CD8-positive, alpha-beta memory T cell (primary cell): ENCODE measurements at regions of chr12 and their contacts with region 1.

Region 1: GRCh38 chr12:54359033-54359761 is 5.1 kb downstream of the GPR84 start:
- DNase-seq: peak; percentile 89 to 97 (median 94)
- H3K4me3 ChIP-seq: peak overlapping the region; percentile 80
- H3K4me3 Mint-ChIP-seq: no peak overlapping the region
- H3K27ac ChIP-seq: peak overlapping the region; percentile 71
- H3K27ac Mint-ChIP-seq: no peak overlapping the region
- H3K4me1 ChIP-seq: peaks cover 23% of the 10 kb centered on the region
- H3K4me1 Mint-ChIP-seq: peaks cover 8 to 13% (median 11%) of the 10 kb centered on the region in 3 donors
- H3K27me3 ChIP-seq: no peaks in the 10 kb centered on the region
- H3K27me3 Mint-ChIP-seq: peaks cover 0 to 2% of the 10 kb centered on the region in 2 donors

Region 2: DNA sequence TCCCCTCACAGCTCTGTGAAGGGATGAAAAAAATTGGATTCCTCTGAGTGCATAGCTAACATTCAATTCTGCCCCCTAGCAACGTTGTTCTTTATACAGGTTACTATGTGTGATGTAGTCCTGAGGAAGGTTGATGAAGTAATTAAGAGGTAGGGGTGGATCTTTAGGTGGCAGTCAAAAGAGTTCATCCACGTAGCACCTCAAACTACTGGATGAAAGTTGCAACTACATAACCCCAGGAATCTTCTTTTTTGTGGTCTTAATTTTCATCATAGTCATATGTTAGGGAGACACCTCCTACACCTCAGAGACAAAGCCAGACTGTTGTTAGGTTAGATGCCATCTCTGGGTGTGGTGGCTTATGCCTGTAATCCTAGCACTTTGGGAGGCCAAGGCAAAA is 48.1 kb before region 1 on chr12:
- CTCF ChIA-PET with region 1: no interaction called
- POLR2A ChIA-PET with region 1: no interaction called
- DNase-seq: no peak
- H3K4me3 ChIP-seq: no peak overlapping the region
- H3K4me3 Mint-ChIP-seq: no peak overlapping the region
- H3K27ac ChIP-seq: no peak overlapping the region
- H3K27ac Mint-ChIP-seq: no peak overlapping the region
- H3K4me1 ChIP-seq: peaks cover 9% of the 10 kb centered on the region
- H3K4me1 Mint-ChIP-seq: peaks cover 10 to 13% (median 11%) of the 10 kb centered on the region in 3 donors
- H3K27me3 ChIP-seq: no peaks in the 10 kb centered on the region
- H3K27me3 Mint-ChIP-seq: peaks cover 3 to 15% of the 10 kb centered on the region in 2 donors

Region 3: GRCh38 chr12:54337280-54337842 is 21.8 kb before region 1 on chr12:
- CTCF ChIA-PET with region 1: interaction called, 48 read pairs
- POLR2A ChIA-PET with region 1: interaction called, 3 read pairs
- DNase-seq: no peak
- H3K4me3 ChIP-seq: no peak overlapping the region
- H3K4me3 Mint-ChIP-seq: no peak overlapping the region
- H3K27ac ChIP-seq: peak overlapping the region; percentile 28
- H3K27ac Mint-ChIP-seq: peak overlapping the region in 2 of 8 donors; percentile 5 to 53
- H3K4me1 ChIP-seq: peaks cover 11% of the 10 kb centered on the region
- H3K4me1 Mint-ChIP-seq: peaks cover 20 to 52% (median 50%) of the 10 kb centered on the region in 3 donors
- H3K27me3 ChIP-seq: no peaks in the 10 kb centered on the region
- H3K27me3 Mint-ChIP-seq: no peaks in the 10 kb centered on the region

Region 4: DNA sequence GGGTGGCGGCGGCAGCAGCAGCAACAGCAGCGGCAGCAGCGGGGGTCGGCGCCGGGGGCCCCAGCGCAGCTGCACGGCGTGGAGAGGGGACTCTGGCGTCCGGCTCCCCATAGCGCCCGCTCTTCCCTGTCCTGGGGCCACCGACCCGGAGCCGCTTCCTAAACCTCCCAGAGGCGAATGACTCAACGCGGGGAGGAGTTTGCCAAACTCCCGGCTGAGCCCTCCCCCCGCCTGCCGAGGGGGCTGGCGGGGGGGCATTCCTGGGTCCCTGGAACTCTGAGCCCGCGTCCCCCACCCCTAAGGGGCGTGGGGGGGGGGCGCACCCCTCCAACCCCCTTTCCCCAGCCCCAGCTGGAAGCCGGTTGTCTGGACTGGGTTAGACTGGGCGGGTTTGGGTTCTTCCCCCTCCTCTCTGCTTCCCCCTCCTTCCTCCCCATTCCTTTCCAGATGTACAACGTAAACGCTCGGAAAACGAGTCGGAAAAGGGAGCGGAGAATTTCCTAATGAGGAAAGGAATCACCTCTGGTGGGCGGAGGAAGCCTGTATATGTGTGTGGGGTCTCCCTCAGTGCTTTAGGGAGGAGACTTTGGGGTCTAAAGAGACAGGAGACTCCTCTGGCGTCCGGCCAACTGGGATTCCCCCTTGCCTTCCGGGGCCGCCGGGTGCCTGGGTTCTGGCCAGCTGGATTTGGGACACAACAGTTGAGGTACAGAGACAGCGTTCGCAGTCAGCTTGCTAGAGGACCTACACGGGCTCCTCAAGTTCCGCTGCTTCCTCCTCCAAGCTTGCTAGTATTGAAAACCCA is 60.1 kb after region 1 on chr12 and contains the start of gene ITGA5:
- CTCF ChIA-PET with region 1: no interaction called
- POLR2A ChIA-PET with region 1: no interaction called
- DNase-seq: peak in 4 of 5 donors; percentile 41 to 66 (median 52)
- H3K4me3 ChIP-seq: peak within 1 kb of the TSS; percentile 89
- H3K4me3 Mint-ChIP-seq: peak within 1 kb of the TSS; percentile 71 to 99 (median 94)
- H3K27ac ChIP-seq: peak within 1 kb of the TSS; percentile 91
- H3K27ac Mint-ChIP-seq: peak within 1 kb of the TSS; percentile 93 to 100 (median 96)
- H3K4me1 ChIP-seq: peaks cover 52% of the 10 kb centered on the region
- H3K4me1 Mint-ChIP-seq: peaks cover 48 to 65% (median 57%) of the 10 kb centered on the region in 3 donors
- H3K27me3 ChIP-seq: no peaks in the 10 kb centered on the region
- H3K27me3 Mint-ChIP-seq: peaks cover 0 to 13% of the 10 kb centered on the region in 2 donors
- total RNA-seq, gene ITGA5: 23.2 to 25.7 TPM

Region 5: GRCh38 chr12:54579696-54580333 is 220.6 kb after region 1 on chr12:
- CTCF ChIA-PET with region 1: no interaction called
- POLR2A ChIA-PET with region 1: no interaction called
- DNase-seq: peak; percentile 56 to 81 (median 70)
- H3K4me3 ChIP-seq: no peak overlapping the region
- H3K4me3 Mint-ChIP-seq: no peak overlapping the region
- H3K27ac ChIP-seq: no peak overlapping the region
- H3K27ac Mint-ChIP-seq: peak overlapping the region in 1 of 8 donors; percentile 72
- H3K4me1 ChIP-seq: no peaks in the 10 kb centered on the region
- H3K4me1 Mint-ChIP-seq: peaks cover 4 to 11% (median 7%) of the 10 kb centered on the region in 3 donors
- H3K27me3 ChIP-seq: peaks cover 5% of the 10 kb centered on the region
- H3K27me3 Mint-ChIP-seq: peaks cover 0 to 13% of the 10 kb centered on the region in 2 donors